ENCODE measurements at regions of chr15 and their contacts with region 1.

Region 1: GRCh38 chr15:50576166-50576565 is 29.7 kb upstream of the USP50 start:
- DNase-seq: no peak
- ATAC-seq: no peak
- H3K4me3 ChIP-seq: no peak overlapping the region
- H3K27ac ChIP-seq: no peak overlapping the region
- H3K4me1 ChIP-seq: peaks cover 2% of the 10 kb centered on the region; the same call in 1 of the 2 replicates
- H3K27me3 ChIP-seq: no peaks in the 10 kb centered on the region
- CTCF ChIP-seq: no peak
- POLR2A ChIP-seq: no peak
- RAD21 ChIP-seq: no peak

Region 2: DNA sequence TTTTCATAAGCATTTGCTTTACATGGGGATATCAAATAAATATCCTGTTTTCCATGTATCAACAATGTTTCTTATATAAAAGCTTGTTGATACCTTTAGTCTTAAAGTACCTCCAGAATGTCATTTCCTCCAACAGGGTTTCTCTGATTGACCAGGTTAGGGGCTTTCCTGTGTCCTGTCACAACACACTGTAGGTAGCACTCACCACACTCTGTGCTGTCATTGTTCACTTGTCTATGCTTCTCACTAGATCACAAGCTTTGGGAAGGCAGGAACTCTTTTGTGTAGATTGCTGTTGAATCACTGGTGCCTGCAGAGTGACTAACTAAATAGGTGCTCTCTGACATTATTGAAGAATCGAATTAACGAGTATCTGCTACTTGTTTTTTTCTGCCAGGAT is 79.5 kb before region 1 on chr15:
- CTCF ChIA-PET with region 1: no interaction called
- POLR2A ChIA-PET with region 1: no interaction called
- dilution Hi-C with region 1: no loop called
- in situ Hi-C with region 1: no loop called
- intact Hi-C with region 1: loop called (anchors 5 kb)
- DNase-seq: no peak
- ATAC-seq: no peak
- H3K4me3 ChIP-seq: no peak overlapping the region
- H3K27ac ChIP-seq: no peak overlapping the region
- H3K4me1 ChIP-seq: no peaks in the 10 kb centered on the region
- H3K27me3 ChIP-seq: no peaks in the 10 kb centered on the region
- CTCF ChIP-seq: no peak
- POLR2A ChIP-seq: no peak
- RAD21 ChIP-seq: no peak

Measured in IMR-90 (cell line).